ENCODE measurements at regions of chr12 and their contacts with region 1.

Region 1: GRCh38 chr12:68871921-68872320 is 61.0 kb downstream of the CPM start:
- ATAC-seq: peak in 1 of 8 experiments; percentile 40
- H3K4me3 ChIP-seq: no peak overlapping the region
- H3K27ac ChIP-seq: no peak overlapping the region
- H3K4me1 ChIP-seq: peaks cover 0 to 5% of the 10 kb centered on the region in 2 donors

Region 2: GRCh38 chr12:69070319-69071090 is 198.6 kb after region 1 on chr12:
- in situ Hi-C with region 1: loop called in 2 of 9 experiments (anchors 10 to 25 kb)
- ATAC-seq: peak in 6 of 8 experiments; percentile 35 to 81 (median 73)
- H3K4me3 ChIP-seq: no peak overlapping the region
- H3K27ac ChIP-seq: no peak overlapping the region
- H3K4me1 ChIP-seq: peaks cover 0 to 2% of the 10 kb centered on the region in 2 donors

Region 3: GRCh38 chr12:69097619-69098368 is 225.9 kb after region 1 on chr12:
- in situ Hi-C with region 1: loop called in 1 of 9 experiments (anchors 25 kb)
- ATAC-seq: no peak
- H3K4me3 ChIP-seq: no peak overlapping the region
- H3K27ac ChIP-seq: no peak overlapping the region
- H3K4me1 ChIP-seq: peaks cover 3 to 12% of the 10 kb centered on the region in 2 donors